Head of caudate nucleus (tissue), 42 donors: ENCODE measurements at regions of chr6 and their contacts with region 1.

Region 1: DNA sequence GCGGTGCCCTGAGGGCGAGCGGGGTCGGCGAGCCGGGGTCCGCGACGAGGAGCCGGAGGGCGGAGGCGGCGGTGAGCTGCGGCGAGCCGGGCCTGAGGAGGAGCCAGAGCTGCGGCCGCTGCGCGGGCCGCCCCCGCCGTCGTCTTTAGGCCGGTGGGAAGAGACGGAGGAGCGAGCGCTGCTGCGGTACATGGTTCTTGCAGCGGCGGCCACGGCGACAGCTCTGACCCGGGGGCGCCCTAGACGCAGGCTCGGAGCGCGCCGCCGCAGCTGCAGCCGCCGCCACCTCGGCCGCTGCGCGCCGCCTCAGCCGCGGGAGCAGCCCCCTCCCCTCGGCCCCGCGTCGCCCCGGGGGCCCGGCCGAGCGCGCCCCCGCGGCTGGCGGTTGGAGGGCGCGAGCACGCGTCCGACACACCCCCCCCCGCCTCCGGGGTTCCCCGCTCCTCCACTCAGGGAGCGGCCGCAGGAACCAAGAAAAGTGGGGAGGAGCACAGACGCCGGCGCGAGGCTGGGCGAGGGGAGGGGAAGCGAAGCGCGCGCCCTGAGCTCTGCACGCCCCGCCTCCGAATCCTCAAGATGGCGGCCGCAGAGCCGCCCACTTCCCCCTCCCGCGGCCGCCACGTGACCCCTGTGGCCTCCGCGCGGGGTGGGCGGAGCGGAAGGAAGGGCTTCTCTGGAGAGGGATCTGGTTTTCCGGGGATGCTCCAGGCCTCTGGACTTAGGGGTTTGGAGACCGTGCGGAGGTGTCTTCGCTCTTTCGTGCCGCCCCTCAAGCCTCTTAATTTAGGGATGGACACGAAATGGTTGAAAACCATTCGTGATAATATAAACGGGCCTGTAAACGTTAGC is at the start of gene ZNF318:
- DNase-seq: peak; percentile 91 to 98 (median 96)

Region 2: DNA sequence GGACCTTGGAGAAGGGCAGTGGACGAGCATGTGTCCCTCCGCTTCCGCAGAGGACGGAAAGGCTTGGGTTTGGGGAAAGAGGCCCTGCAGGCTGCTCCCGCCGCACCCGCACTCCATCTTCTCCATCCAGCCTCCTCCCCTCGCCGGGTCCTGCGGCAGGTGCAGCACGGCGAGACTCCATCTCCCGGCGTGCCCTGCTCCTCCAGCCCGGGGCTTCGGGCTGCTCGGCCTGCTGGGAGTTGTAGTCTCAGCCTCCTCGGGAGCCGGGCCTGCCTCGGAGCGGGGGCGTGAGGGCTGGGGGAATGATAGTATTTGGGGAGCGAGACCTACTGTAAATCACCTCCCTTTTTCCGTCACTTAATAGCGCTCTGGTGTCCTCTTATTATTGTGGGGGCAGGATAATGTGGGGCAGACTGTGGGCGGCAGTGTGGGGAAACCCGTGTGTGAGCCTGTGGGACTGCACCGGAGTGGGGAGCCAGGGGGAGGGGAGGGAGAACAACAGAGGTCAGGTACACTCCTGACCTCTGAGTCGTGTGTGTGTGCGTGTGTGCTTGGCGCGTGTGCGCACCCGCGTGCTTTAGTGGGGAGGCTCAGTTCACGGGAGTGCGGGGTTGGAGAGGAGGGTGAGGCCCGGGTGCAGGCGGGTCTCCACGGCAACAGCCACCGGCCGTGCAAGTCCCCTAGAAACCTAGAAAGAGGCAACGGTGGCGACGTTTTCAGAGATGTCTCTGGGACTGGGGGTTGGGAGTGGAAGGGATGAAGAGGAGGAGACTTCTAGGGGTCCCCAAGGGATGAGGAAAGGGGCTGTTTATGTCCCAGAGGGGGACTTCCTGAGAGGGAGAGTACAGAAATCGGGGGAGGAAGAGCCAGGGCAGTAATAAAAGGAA is 122.0 kb before region 1 on chr6:
- intact Hi-C with region 1: loop called (anchors 10 kb)
- DNase-seq: peak; percentile 73 to 97 (median 92)

Region 3: GRCh38 chr6:43427406-43428111 is 58.2 kb after region 1 on chr6 and contains the start of gene ABCC10:
- intact Hi-C with region 1: loop called (anchors 2 kb)
- DNase-seq: peak; percentile 87 to 97 (median 94)

Region 4: GRCh38 chr6:43506667-43507471 is 137.5 kb after region 1 on chr6:
- intact Hi-C with region 1: loop called (anchors 5 kb)
- DNase-seq: peak; percentile 60 to 95 (median 85)